OCI-LY7 (cell line): ENCODE measurements at regions of chr7 and their contacts with region 1.

Region 1: GRCh38 chr7:102390697-102391484 is 5.3 kb upstream of the PRKRIP1 start:
- DNase-seq: peak; percentile 81
- H3K4me3 ChIP-seq: no peak overlapping the region
- H3K27ac ChIP-seq: no peak overlapping the region
- H3K4me1 ChIP-seq: peaks cover 15% of the 10 kb centered on the region
- CTCF ChIP-seq: peak; percentile 96

Region 2: GRCh38 chr7:102106625-102107024 is 284.3 kb before region 1 on chr7:
- CTCF ChIA-PET with region 1: no interaction called
- POLR2A ChIA-PET with region 1: no interaction called
- intact Hi-C with region 1: no loop called
- DNase-seq: no peak
- H3K4me3 ChIP-seq: no peak overlapping the region
- H3K27ac ChIP-seq: no peak overlapping the region
- H3K4me1 ChIP-seq: no peaks in the 10 kb centered on the region
- CTCF ChIP-seq: no peak

Region 3: DNA sequence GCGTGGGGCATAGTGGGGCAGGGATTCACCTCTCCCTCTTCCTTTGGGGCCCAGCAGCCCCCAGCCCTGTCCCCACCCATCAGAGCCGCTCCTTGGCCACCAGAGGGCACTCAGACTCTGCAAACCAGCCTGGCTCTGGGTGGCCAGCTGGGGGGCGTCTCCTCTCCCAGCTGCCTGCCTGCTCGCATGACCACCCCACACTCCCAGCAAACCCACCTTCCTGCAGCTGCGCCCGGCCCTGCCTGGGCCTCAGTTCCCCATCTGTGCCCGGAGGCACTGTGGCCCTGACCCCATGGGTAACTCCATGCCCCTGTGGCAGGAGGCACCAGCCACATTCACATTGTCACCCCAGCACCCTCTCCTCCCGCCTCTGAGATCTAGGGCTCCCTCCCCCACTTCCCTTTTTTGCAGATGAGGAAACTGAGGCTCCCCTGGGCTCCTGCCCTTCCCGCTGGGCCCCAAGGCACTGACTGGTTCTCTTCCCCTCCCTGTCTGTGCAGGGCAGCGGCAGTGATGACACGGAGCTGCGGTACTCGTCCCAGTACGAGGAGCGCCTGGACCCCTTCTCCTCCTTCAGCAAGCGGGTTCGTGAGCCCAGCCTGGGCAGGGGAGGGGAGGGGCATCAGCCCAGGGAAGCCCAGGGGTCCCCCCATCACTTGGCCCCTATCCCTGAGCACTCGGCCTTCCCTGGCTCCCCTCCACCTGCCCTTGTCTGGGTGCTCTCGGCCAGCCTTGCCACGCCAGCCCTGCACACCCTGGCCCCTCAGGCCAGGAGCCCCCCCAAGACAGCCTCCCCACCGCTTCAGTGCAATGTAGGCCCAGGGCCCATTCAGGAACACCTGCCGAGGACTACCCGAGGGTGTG is 111.1 kb before region 1 on chr7:
- CTCF ChIA-PET with region 1: interaction called, 3 read pairs
- POLR2A ChIA-PET with region 1: interaction called, 6 read pairs
- intact Hi-C with region 1: loop called (anchors 1 kb)
- DNase-seq: peak; percentile 88
- H3K4me3 ChIP-seq: peak overlapping the region; percentile 50
- H3K27ac ChIP-seq: peak overlapping the region; percentile 87
- H3K4me1 ChIP-seq: peaks cover 49% of the 10 kb centered on the region
- CTCF ChIP-seq: peak; percentile 95

Region 4: DNA sequence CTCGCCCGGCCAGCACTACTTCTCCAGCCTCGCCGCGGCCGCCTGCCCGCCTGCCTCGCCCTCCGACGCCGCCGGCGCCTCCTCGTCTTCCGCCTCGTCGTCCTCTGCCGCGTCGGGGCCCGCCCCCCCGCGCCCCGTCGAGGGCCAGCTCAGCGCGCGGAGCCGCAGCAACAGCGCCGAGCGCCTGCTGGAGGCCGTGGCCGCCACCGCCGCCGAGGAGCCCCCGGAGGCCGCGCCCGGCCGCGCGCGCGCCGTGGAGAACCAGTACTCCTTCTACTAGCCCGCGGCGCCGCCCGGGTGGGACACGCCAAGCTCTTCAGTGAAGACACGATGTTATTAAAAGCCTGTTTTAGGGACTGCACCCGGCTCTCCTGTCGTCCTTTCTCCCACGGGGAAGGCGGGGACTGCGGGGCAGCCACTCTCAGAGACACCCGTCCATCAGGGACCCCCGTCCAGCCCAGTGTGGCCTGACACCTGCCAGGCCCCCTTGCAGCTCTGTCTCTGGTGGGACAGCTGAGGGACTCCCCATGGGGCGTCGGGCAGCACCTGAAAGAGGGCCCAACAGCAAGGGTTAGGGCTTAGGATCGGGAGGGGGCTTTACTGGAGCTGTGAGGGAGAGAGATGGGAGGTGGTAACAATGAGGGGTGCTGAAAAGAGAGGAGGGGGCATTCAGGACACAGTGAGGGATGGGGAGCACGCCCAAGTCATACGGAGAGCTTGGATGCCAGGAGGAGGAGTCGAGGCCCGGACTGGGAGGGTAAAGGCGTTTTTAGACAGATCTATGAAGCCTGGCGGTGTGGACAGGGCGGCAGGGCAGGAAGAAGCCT is 69.3 kb before region 1 on chr7:
- CTCF ChIA-PET with region 1: no interaction called
- POLR2A ChIA-PET with region 1: no interaction called
- intact Hi-C with region 1: loop called (anchors 5 kb)
- DNase-seq: no peak
- H3K4me3 ChIP-seq: no peak overlapping the region
- H3K27ac ChIP-seq: no peak overlapping the region
- H3K4me1 ChIP-seq: peaks cover 7% of the 10 kb centered on the region
- CTCF ChIP-seq: no peak

Region 5: DNA sequence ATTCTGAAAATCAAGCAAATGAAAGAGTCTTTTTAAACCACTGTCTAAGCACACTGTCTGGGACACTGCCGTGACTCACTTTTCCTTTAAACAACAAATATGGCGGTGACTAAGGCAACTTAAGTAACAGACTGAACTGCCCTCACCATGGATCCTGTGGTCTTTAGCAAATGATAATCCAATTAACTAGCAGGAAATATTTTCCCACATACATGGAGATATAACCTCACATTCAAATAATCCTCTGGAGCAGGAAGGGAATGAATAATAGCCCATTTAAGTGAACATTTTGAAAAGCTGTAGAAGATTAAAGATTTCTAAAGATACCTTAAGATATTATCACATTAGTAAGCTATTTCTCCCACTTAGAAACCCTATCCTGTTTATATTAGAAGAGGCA is 481.6 kb after region 1 on chr7:
- CTCF ChIA-PET with region 1: no interaction called
- POLR2A ChIA-PET with region 1: no interaction called
- intact Hi-C with region 1: no loop called
- DNase-seq: no peak
- H3K4me3 ChIP-seq: no peak overlapping the region
- H3K27ac ChIP-seq: no peak overlapping the region
- H3K4me1 ChIP-seq: no peaks in the 10 kb centered on the region
- CTCF ChIP-seq: no peak